ENCODE measurements at regions of chr1 and their contacts with region 1.

Region 1: DNA sequence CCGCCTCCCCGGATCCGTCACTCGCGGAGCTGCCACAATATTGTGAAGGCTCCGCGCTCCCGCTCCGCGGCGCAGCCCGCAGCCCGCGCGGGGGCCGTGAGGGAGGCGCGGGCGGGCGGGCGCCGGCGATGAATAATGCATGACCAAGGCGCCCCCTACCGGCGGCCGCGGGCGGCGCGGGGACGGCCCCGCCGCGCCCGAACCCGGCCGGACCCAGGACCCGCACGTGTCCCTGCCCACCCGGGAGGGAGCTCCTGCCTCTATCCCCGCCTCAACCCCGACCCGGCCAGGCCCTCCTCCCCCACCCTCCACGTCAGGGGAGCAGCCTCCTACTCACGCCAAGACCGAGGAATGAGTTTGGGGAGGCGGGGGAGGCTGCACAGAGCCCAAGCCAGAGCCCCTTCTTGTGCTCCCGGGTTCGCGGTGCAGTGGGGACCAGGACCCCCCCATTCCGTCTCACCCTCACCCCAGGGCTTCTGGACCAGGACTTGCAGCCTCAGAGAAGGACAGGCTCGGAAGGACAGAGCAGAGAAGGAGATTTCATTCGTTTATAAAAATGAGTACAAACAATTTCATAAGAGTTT is 70.8 kb upstream of the CASZ1 start:
- DNase-seq: peak in 1 of 2 experiments; percentile 60
- H3K4me3 ChIP-seq: peak overlapping the region; percentile 51; the same call in 1 of the 2 replicates
- H3K27ac ChIP-seq: no peak overlapping the region
- H3K4me1 ChIP-seq: no peaks in the 10 kb centered on the region
- H3K27me3 ChIP-seq: no peaks in the 10 kb centered on the region
- CTCF ChIP-seq: peak; percentile 51; the same call in 1 of the 2 replicates

Region 2: DNA sequence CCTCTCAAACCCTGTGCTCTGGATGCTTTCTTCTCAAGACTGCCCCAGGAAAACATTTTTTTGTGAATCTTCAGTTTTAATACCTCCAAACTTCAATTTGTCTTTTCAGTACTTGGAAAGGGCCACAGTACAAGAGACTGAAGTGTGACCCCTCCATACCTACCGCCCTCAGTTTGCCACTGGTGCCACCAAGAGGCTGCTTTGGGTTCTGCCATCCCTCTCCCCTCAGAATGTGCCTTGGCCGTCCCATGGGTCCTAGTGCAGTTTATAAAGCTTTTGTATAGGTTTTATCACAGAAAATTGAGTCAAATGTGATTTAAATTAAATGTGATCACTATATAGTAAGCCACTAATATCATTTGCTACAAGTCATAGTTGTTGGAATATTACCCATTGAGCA is 529.2 kb before region 1 on chr1:
- CTCF ChIA-PET with region 1: no interaction called
- POLR2A ChIA-PET with region 1: no interaction called
- intact Hi-C with region 1: no loop called
- DNase-seq: peak in 1 of 2 experiments; percentile 18
- H3K4me3 ChIP-seq: no peak overlapping the region
- H3K27ac ChIP-seq: no peak overlapping the region
- H3K4me1 ChIP-seq: 0 out of 2 replicates have a peak, but pooled peaks cover 17% of the 10 kb centered on the region
- H3K27me3 ChIP-seq: no peaks in the 10 kb centered on the region
- CTCF ChIP-seq: peak; percentile 64

Region 3: DNA sequence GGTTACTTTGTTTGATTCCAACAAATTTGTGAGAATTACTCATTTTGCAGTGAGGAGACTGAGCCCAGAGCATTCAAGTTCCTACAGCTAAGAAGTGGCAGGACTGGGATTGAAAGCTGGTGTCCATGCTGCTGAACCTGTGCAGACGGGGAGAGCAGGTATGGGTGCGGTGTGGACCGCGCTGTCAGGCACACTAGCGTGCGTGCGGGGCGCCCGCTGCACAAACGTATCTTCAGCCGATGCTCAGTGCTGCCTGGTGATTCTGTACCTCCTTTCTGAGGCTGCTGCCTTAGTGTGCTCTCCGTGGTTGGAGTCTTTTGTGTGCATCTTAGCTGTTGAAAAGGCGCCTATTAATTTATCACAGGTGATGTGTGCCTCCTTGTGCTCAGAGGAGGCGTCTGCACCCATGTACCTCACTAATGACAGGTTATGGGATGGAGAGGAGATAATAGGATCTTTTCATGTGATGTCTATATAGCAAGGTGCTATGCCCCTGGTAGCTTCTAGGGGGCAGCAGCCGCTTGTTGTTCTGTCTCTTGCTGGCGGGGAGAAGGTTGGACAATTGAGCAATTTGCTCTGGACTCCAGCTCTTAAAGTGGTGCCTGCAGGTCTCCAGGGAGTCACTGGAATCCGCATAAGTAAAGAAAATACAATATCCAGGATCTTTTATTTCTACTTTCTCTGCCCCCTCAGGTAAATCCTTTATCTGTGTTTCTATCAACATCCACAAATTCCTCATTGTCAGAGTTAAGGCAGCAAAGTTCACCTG is 359.9 kb before region 1 on chr1:
- CTCF ChIA-PET with region 1: no interaction called
- POLR2A ChIA-PET with region 1: no interaction called
- intact Hi-C with region 1: loop called (anchors 5 kb)
- DNase-seq: peak; percentile 45 to 49
- H3K4me3 ChIP-seq: no peak overlapping the region
- H3K27ac ChIP-seq: no peak overlapping the region
- H3K4me1 ChIP-seq: peaks cover 28% of the 10 kb centered on the region
- H3K27me3 ChIP-seq: no peaks in the 10 kb centered on the region
- CTCF ChIP-seq: peak; percentile 79

Region 4: DNA sequence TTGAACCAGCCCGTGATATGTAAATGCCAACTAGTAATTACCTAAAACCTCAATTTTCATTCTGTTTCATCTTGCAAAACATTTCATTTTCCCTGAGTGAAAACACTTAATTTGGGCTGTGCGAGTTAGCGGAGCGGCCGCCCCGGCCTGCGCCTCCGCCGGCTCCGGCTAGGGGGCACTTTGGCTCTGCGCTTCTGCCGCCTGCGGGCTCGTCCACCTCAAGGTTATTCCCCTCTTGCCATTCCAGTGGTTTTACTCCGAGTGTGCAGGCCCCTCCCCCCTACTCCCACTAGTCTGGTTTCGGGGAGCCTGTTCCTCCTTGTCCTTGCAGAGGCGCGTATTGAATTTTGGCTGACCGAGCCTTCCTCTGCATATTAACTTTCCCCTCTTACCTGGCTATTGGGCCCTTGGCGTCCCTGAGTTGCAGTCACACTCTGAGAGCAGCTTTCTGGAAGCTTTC is 336.9 kb before region 1 on chr1:
- CTCF ChIA-PET with region 1: no interaction called
- POLR2A ChIA-PET with region 1: no interaction called
- intact Hi-C with region 1: loop called (anchors 2 kb)
- DNase-seq: peak in 1 of 2 experiments; percentile 68
- H3K4me3 ChIP-seq: no peak overlapping the region
- H3K27ac ChIP-seq: no peak overlapping the region
- H3K4me1 ChIP-seq: peaks cover 25% of the 10 kb centered on the region
- H3K27me3 ChIP-seq: no peaks in the 10 kb centered on the region
- CTCF ChIP-seq: no peak

Region 5: GRCh38 chr1:10694633-10695627 is 172.3 kb before region 1 on chr1:
- CTCF ChIA-PET with region 1: no interaction called
- POLR2A ChIA-PET with region 1: no interaction called
- intact Hi-C with region 1: loop called (anchors 2 kb)
- DNase-seq: peak; percentile 58 to 89
- H3K4me3 ChIP-seq: peak overlapping the region; percentile 46; the same call in 1 of the 2 replicates
- H3K27ac ChIP-seq: no peak overlapping the region
- H3K4me1 ChIP-seq: peaks cover 32% of the 10 kb centered on the region
- H3K27me3 ChIP-seq: no peaks in the 10 kb centered on the region
- CTCF ChIP-seq: no peak

Region 6: GRCh38 chr1:10803971-10804820 is 63.0 kb before region 1 on chr1:
- CTCF ChIA-PET with region 1: interaction called, 13 read pairs
- POLR2A ChIA-PET with region 1: no interaction called
- intact Hi-C with region 1: no loop called
- DNase-seq: peak; percentile 68 to 80
- H3K4me3 ChIP-seq: peak overlapping the region; percentile 50; the same call in 1 of the 2 replicates
- H3K27ac ChIP-seq: peak overlapping the region; percentile 71
- H3K4me1 ChIP-seq: peaks cover 14% of the 10 kb centered on the region
- H3K27me3 ChIP-seq: no peaks in the 10 kb centered on the region
- CTCF ChIP-seq: no peak

Region 7: DNA sequence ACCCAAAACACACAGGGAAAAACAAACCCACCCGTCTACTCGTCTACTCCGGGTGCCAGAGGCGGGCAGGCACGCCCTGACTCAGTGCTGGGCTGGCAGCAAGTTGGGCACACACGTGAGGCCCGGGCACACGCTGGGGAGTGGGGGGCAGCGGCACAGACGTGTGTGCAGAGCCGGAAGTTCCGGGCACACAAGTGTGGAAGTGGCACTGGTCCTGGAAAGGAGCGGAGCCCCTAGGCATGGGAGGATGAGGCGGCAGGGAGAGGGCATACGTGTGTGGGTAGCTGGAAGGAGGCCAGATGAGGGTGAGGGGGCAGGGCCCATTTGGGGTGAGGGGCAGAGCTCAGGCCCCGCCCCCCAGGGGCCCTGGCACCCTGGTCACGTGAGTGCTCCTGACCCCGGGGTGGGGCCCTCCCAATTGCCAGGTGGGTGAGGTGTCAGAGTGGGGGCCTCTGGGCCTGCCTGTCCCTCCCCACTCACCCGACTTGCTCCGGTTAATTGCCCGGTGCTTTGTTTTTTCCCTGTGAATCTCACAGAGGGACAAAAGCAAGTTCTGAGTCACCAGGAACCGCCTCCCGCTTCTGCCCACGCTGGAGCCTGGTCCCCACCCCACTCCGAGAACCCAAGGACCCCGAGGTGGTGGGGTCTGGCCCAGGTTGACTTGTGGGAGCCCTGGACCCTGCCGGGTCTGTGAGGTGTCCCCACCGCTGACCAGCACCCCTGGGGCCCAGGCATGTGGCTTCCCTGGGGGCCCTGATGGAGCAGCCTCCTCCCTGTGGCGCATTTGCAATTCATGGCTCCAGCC is 34.1 kb after region 1 on chr1:
- CTCF ChIA-PET with region 1: no interaction called
- POLR2A ChIA-PET with region 1: interaction called, 4 read pairs
- intact Hi-C with region 1: loop called (anchors 5 kb)
- DNase-seq: peak; percentile 71 to 82
- H3K4me3 ChIP-seq: peak overlapping the region; percentile 43; the same call in 1 of the 2 replicates
- H3K27ac ChIP-seq: peak overlapping the region; percentile 100
- H3K4me1 ChIP-seq: peaks cover 57% of the 10 kb centered on the region
- H3K27me3 ChIP-seq: no peaks in the 10 kb centered on the region
- CTCF ChIP-seq: no peak

Region 8: DNA sequence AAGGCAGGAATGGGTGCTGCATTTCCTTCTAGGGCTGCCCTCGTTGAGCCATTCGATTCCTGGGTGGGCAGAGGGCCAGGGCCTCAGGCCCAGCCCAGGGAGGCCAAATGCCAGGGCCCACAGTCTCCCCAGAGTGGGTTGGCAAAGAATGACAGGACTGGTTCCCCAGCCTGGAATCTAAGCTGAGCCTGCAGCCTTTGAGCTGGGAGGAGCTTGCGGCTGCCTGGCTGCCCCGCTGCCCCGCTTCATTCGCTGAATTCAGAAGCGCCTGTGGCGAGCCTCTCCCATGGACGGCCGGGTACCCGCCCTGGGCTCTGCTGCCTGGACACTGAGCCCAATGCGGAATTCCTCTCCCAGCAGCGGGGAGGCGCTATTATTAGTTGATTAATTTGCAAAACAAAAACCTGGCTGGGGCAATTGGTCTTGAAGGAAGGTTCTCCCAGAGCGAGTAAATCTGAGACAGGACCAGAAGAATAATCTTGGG is 112.9 kb after region 1 on chr1:
- CTCF ChIA-PET with region 1: interaction called, 12 read pairs
- POLR2A ChIA-PET with region 1: no interaction called
- intact Hi-C with region 1: no loop called
- DNase-seq: peak; percentile 81 to 93
- H3K4me3 ChIP-seq: no peak overlapping the region
- H3K27ac ChIP-seq: no peak overlapping the region
- H3K4me1 ChIP-seq: no peaks in the 10 kb centered on the region; the same call in none of the 2 replicates
- H3K27me3 ChIP-seq: no peaks in the 10 kb centered on the region
- CTCF ChIP-seq: peak; percentile 58

Measured in PC-9 (cell line).